PC-9 (cell line): ENCODE measurements at regions of chr7 and their contacts with region 1.

Region 1: GRCh38 chr7:130010689-130011412 is 40.3 kb downstream of the ZC3HC1 start:
- DNase-seq: peak; percentile 83 to 94
- H3K4me3 ChIP-seq: peak overlapping the region; percentile 29; the same call in 1 of the 2 replicates
- H3K27ac ChIP-seq: peak overlapping the region; percentile 99
- H3K4me1 ChIP-seq: peaks cover 26% of the 10 kb centered on the region
- H3K27me3 ChIP-seq: no peaks in the 10 kb centered on the region
- CTCF ChIP-seq: peak; percentile 97

Region 2: DNA sequence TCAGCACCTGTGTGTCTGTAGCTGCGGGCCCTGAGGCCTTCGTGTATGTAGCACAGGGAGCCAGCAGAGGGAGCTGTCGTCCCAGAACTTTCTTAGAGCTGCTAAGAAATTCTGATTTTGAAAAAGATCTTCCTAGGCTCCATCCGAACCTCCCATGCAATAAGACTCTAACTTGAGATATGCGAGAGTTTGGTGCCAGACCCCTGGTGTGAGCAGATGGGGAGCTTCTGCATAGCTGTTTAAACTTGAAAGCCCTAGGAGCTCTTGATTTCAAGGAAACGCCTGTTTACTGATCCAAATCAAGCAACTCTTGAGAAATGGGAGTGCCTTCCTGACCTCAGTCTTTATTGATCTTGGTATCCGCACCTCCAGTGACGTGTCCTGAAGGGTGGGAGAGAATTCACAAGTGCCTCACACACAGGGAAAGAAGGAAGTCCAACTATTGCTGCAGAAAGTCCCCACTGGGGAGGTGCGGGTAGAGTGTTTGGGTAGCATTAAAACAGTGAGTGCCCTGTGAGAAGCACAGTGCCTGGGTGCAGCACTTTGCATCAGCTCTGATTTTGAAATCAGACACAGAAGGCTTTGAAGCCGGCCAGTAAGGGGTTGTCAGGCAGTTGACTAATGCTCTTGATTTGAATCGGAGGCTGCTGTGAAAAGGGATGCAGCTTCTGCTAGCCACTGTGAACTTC is 643.0 kb before region 1 on chr7:
- CTCF ChIA-PET with region 1: no interaction called
- POLR2A ChIA-PET with region 1: no interaction called
- intact Hi-C with region 1: loop called (anchors 2 kb)
- DNase-seq: peak; percentile 76 to 98
- H3K4me3 ChIP-seq: peak overlapping the region; percentile 76
- H3K27ac ChIP-seq: peak overlapping the region; percentile 97
- H3K4me1 ChIP-seq: peaks cover 36% of the 10 kb centered on the region
- H3K27me3 ChIP-seq: no peaks in the 10 kb centered on the region
- CTCF ChIP-seq: peak; percentile 94

Region 3: GRCh38 chr7:129698516-129699418 is 312.1 kb before region 1 on chr7:
- CTCF ChIA-PET with region 1: no interaction called
- POLR2A ChIA-PET with region 1: no interaction called
- intact Hi-C with region 1: no loop called
- DNase-seq: no peak
- H3K4me3 ChIP-seq: no peak overlapping the region
- H3K27ac ChIP-seq: peak overlapping the region; percentile 80
- H3K4me1 ChIP-seq: peaks cover 11% of the 10 kb centered on the region
- H3K27me3 ChIP-seq: no peaks in the 10 kb centered on the region
- CTCF ChIP-seq: no peak

Region 4: GRCh38 chr7:129780257-129780973 is 230.4 kb before region 1 on chr7:
- CTCF ChIA-PET with region 1: no interaction called
- POLR2A ChIA-PET with region 1: interaction called, 7 read pairs
- intact Hi-C with region 1: loop called (anchors 1 kb)
- DNase-seq: peak; percentile 84 to 98
- H3K4me3 ChIP-seq: peak overlapping the region; percentile 85
- H3K27ac ChIP-seq: peak overlapping the region; percentile 21
- H3K4me1 ChIP-seq: peaks cover 17% of the 10 kb centered on the region
- H3K27me3 ChIP-seq: no peaks in the 10 kb centered on the region
- CTCF ChIP-seq: no peak

Region 5: GRCh38 chr7:129845178-129845971 is 165.5 kb before region 1 on chr7:
- CTCF ChIA-PET with region 1: interaction called, 3 read pairs
- POLR2A ChIA-PET with region 1: no interaction called
- intact Hi-C with region 1: loop called (anchors 1 kb)
- DNase-seq: peak; percentile 55 to 69
- H3K4me3 ChIP-seq: no peak overlapping the region
- H3K27ac ChIP-seq: peak overlapping the region; percentile 88
- H3K4me1 ChIP-seq: peaks cover 46% of the 10 kb centered on the region
- H3K27me3 ChIP-seq: no peaks in the 10 kb centered on the region
- CTCF ChIP-seq: no peak

Region 6: DNA sequence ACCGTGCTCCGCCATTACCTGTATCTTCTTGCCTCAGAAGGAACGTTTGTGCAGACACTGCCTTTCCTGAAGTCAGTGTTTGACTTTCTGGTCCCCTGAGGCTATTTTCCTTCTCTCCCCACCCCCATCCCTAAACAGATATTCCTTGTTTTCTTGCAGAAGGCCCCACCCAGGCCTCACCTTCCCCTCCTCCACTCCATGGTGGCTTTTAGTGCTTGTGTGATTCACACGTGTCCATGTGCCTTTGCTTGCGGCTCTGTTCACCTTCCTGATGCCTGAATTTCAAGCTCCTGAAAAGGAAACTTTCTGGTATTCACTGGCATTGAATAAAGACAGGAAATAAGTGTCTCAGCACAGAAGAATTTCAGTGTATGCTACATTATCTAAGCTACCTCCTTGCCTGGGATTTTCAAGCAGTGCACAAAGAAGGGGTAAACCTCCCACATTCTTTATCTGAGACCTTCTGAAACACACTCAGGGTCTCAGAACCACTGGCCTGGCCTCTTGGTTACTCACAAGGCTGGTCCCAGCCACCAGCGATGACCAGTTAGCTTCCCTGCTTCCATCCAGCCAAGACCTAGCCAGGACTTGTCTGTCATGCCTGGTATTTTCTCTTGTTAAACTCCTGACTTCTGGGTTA is 40.9 kb before region 1 on chr7:
- CTCF ChIA-PET with region 1: interaction called, 4 read pairs
- POLR2A ChIA-PET with region 1: interaction called, 51 read pairs
- intact Hi-C with region 1: loop called (anchors 1 kb)
- DNase-seq: peak; percentile 97 to 99
- H3K4me3 ChIP-seq: peak overlapping the region; percentile 22; the same call in 1 of the 2 replicates
- H3K27ac ChIP-seq: peak overlapping the region; percentile 99
- H3K4me1 ChIP-seq: peaks cover 47% of the 10 kb centered on the region
- H3K27me3 ChIP-seq: no peaks in the 10 kb centered on the region
- CTCF ChIP-seq: no peak

Region 7: DNA sequence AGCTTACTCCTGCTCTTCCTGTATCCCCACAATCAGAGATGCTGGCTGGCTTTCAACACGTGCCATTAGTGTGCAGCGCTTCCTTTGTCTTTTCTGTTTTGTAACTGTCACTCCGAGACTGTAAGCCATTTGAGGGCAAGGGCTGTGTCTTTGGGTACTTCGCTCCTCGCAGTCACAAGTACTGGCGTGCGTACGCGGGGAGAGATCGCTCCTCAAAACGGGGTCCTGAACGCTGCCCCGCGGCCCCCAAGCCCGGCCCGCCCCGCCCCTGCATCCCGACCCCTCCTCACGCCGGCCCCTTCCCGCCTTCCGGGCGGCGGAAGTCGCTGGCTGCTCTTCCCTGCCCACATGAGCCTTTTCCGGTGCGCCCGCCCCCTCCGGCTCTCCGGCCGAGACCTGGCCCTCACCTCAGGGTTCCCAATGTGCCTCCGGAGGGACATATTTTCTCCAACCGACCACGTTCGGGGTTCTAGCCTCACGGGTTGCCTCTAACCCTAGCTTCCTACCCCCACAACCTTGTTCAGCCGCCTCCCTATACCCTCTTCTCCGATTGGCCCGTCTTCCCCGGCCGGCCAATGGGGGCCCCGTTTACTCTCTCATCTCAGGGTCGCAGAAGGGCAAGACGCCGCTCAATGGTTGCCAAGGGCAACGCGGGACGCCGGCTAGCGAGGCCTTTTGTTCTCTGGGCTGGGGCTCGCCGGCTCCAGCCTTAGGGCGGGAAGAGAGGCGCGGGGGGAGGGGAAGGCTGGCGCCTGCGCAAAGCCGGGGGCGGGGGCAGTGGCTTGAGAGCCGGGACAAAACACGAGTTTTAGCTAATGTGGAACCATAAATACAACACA is 429.9 kb after region 1 on chr7 and contains the start of gene CEP41:
- CTCF ChIA-PET with region 1: no interaction called
- POLR2A ChIA-PET with region 1: interaction called, 15 read pairs
- intact Hi-C with region 1: no loop called
- DNase-seq: peak; percentile 93 to 99
- H3K4me3 ChIP-seq: peak within 1 kb of the TSS; percentile 73
- H3K27ac ChIP-seq: peak within 1 kb of the TSS; percentile 65
- H3K4me1 ChIP-seq: peaks cover 15% of the 10 kb centered on the region
- H3K27me3 ChIP-seq: no peaks in the 10 kb centered on the region
- CTCF ChIP-seq: no peak
- total RNA-seq, gene CEP41: 16.3 and 18.0 TPM in 2 replicates